GM12878 (cell line): ENCODE measurements at regions of chr12 and their contacts with region 1.

Region 1: DNA sequence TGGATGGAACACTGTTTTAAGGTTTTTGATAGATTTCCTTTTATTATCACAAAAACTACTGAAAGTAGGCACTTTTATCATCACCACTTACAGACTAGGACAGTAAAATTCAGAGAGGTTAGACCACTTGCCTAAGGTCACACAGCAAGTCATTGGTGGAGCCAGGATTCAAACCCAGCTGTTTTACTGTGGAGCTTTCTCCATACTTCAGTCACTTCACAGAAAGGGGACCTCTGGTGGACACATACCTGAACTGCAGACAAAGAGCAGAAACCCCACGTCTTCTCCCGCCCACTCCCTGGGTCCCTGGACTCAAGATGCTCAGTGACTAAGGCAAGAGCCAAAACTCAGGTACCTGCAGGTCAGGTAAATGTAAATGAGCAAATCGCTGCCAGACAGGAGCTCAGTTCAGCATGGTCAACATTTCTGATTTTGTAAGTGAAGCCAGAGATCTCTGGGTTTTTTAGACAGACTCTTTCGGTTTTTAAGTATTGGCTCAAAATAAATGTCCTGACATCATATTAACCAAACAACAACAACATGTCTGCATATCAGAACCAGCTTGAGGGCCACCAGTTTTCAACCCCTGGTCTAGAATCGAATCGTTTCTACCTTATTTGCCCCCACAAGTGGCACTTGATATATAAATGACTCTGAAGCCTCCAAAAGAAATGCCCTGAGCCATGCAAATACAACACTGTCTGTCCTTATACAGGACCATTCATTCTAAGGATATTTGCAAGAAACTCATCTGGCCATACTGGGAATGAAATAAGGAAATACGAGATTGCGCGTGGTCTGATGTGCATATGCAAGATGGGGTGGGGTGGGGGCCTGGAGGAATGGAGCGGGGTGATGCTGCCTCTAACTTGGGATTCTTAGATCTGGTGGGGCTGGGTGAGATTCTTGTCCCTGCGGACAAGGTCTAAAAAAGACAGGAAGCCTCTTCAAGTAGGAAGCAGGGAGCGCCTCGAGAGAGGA is 110.9 kb downstream of the KSR2 start:
- DNase-seq: peak; percentile 25
- ATAC-seq: peak; percentile 82
- H3K4me3 ChIP-seq: no peak overlapping the region
- H3K27ac ChIP-seq: no peak overlapping the region
- H3K4me1 ChIP-seq: no peaks in the 10 kb centered on the region
- H3K27me3 ChIP-seq: no peaks in the 10 kb centered on the region; a peak in 1 of 4 replicates
- CTCF ChIP-seq: peak; percentile 55 to 79 (median 65)
- EP300 ChIP-seq: no peak
- POLR2A ChIP-seq: no peak
- RAD21 ChIP-seq: 0 out of 2 replicates have a peak, but pooled peaks have one; percentile 21

Region 2: GRCh38 chr12:117212563-117213190 is 645.2 kb before region 1 on chr12:
- CTCF ChIA-PET with region 1: interaction called, 10 read pairs
- POLR2A ChIA-PET with region 1: no interaction called
- RAD21 ChIA-PET with region 1: interaction called, 3 read pairs
- SMC1A ChIA-PET with region 1: no interaction called
- in situ Hi-C with region 1: no loop called
- intact Hi-C with region 1: no loop called
- DNase-seq: no peak
- ATAC-seq: peak; percentile 88
- H3K4me3 ChIP-seq: no peak overlapping the region
- H3K27ac ChIP-seq: no peak overlapping the region
- H3K4me1 ChIP-seq: no peaks in the 10 kb centered on the region; the same call in 1 of the 2 replicates
- H3K27me3 ChIP-seq: no peaks in the 10 kb centered on the region; a peak in 1 of 4 replicates
- CTCF ChIP-seq: peak; percentile 88 to 94 (median 89)
- EP300 ChIP-seq: no peak
- POLR2A ChIP-seq: no peak
- RAD21 ChIP-seq: peak; percentile 84

Region 3: GRCh38 chr12:117367011-117367638 is 490.8 kb before region 1 on chr12:
- CTCF ChIA-PET with region 1: interaction called, 50 read pairs
- POLR2A ChIA-PET with region 1: no interaction called
- RAD21 ChIA-PET with region 1: interaction called, 12 read pairs
- SMC1A ChIA-PET with region 1: interaction called, 6 read pairs
- in situ Hi-C with region 1: no loop called
- intact Hi-C with region 1: loop called (anchors 5 kb)
- DNase-seq: peak; percentile 12
- ATAC-seq: peak; percentile 78
- H3K4me3 ChIP-seq: no peak overlapping the region
- H3K27ac ChIP-seq: no peak overlapping the region
- H3K4me1 ChIP-seq: no peaks in the 10 kb centered on the region
- H3K27me3 ChIP-seq: peaks cover 0 to 2% of the 10 kb centered on the region in 2 experiments; a peak in 1 of 4 replicates
- CTCF ChIP-seq: peak; percentile 83 to 87 (median 86)
- EP300 ChIP-seq: no peak
- POLR2A ChIP-seq: no peak
- RAD21 ChIP-seq: peak; percentile 89

Region 4: GRCh38 chr12:117649796-117650195 is 208.1 kb before region 1 on chr12:
- CTCF ChIA-PET with region 1: no interaction called
- POLR2A ChIA-PET with region 1: no interaction called
- RAD21 ChIA-PET with region 1: no interaction called
- SMC1A ChIA-PET with region 1: no interaction called
- in situ Hi-C with region 1: no loop called
- intact Hi-C with region 1: no loop called
- DNase-seq: no peak
- ATAC-seq: no peak
- H3K4me3 ChIP-seq: no peak overlapping the region
- H3K27ac ChIP-seq: no peak overlapping the region
- H3K4me1 ChIP-seq: no peaks in the 10 kb centered on the region
- H3K27me3 ChIP-seq: no peaks in the 10 kb centered on the region; a peak in 1 of 4 replicates
- CTCF ChIP-seq: no peak
- EP300 ChIP-seq: no peak
- POLR2A ChIP-seq: no peak
- RAD21 ChIP-seq: no peak

Region 5: GRCh38 chr12:117662620-117663395 is 195.1 kb before region 1 on chr12:
- CTCF ChIA-PET with region 1: no interaction called
- POLR2A ChIA-PET with region 1: no interaction called
- RAD21 ChIA-PET with region 1: no interaction called
- SMC1A ChIA-PET with region 1: no interaction called
- in situ Hi-C with region 1: no loop called
- intact Hi-C with region 1: no loop called
- DNase-seq: no peak
- ATAC-seq: no peak
- H3K4me3 ChIP-seq: no peak overlapping the region
- H3K27ac ChIP-seq: no peak overlapping the region
- H3K4me1 ChIP-seq: no peaks in the 10 kb centered on the region
- H3K27me3 ChIP-seq: no peaks in the 10 kb centered on the region
- CTCF ChIP-seq: no peak
- EP300 ChIP-seq: no peak
- POLR2A ChIP-seq: no peak
- RAD21 ChIP-seq: no peak

Region 6: DNA sequence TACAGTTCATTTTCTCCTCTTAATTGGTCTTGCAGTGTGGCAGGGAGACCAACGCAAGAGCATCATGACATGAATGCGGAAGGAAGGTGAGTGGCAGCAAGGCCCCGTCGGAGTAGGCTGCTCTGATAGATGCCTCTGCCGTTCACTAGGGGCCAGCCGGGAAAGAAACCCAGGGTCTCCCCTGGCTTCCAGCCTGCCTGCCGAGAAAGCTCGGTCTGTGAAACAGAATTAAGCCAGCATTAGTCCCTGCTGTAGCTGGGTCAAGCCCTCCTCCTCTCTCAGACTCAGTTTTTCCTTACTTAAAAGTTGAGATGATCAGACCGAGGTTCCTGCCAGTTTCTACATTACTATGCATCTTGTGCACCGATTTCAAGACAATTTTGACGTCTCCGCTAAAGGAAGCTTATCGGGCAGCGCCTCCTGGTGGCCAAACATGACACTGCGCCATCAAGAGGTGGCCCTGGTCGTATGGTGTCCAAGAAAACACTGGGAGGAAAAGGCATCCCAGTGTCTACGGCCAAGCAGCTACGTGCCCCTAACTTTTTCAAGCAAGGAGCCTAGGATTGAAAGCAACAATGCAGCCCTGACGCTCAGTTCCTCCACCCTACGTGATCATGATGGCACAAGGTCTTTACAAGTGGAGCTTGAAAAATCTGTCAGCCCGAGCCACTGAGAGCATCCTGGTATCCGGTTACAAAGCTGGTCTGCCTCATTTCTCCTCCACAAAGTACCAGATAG is 20.8 kb before region 1 on chr12:
- CTCF ChIA-PET with region 1: interaction called, 40 read pairs
- POLR2A ChIA-PET with region 1: no interaction called
- RAD21 ChIA-PET with region 1: interaction called, 12 read pairs
- SMC1A ChIA-PET with region 1: interaction called, 6 read pairs
- in situ Hi-C with region 1: no loop called
- intact Hi-C with region 1: no loop called
- DNase-seq: peak; percentile 20
- ATAC-seq: peak; percentile 88
- H3K4me3 ChIP-seq: no peak overlapping the region
- H3K27ac ChIP-seq: no peak overlapping the region
- H3K4me1 ChIP-seq: no peaks in the 10 kb centered on the region
- H3K27me3 ChIP-seq: no peaks in the 10 kb centered on the region; a peak in 1 of 4 replicates
- CTCF ChIP-seq: peak; percentile 95 to 98 (median 96)
- EP300 ChIP-seq: no peak
- POLR2A ChIP-seq: no peak
- RAD21 ChIP-seq: peak; percentile 89

Region 7: GRCh38 chr12:118035246-118036041 is 177.5 kb after region 1 on chr12:
- CTCF ChIA-PET with region 1: interaction called, 13 read pairs
- POLR2A ChIA-PET with region 1: no interaction called
- RAD21 ChIA-PET with region 1: interaction called, 7 read pairs
- SMC1A ChIA-PET with region 1: interaction called, 3 read pairs
- in situ Hi-C with region 1: no loop called
- intact Hi-C with region 1: no loop called
- DNase-seq: peak; percentile 90
- ATAC-seq: peak; percentile 91
- H3K4me3 ChIP-seq: no peak overlapping the region
- H3K27ac ChIP-seq: peak overlapping the region; percentile 75
- H3K4me1 ChIP-seq: peaks cover 29% of the 10 kb centered on the region
- H3K27me3 ChIP-seq: no peaks in the 10 kb centered on the region
- CTCF ChIP-seq: peak in 2 of 3 experiments; percentile 5 to 13; a peak in 1 of 6 replicates
- EP300 ChIP-seq: peak; percentile 60 to 74; a peak in 3 of 4 replicates
- POLR2A ChIP-seq: 0 out of 2 replicates have a peak, but pooled peaks have one; percentile 19
- RAD21 ChIP-seq: no peak

Region 8: GRCh38 chr12:118061011-118061875 is 203.3 kb after region 1 on chr12 and contains the start of gene WSB2:
- CTCF ChIA-PET with region 1: interaction called, 22 read pairs
- POLR2A ChIA-PET with region 1: interaction called, 3 read pairs
- RAD21 ChIA-PET with region 1: interaction called, 5 read pairs
- SMC1A ChIA-PET with region 1: interaction called, 3 read pairs
- in situ Hi-C with region 1: no loop called
- intact Hi-C with region 1: no loop called
- DNase-seq: no peak
- ATAC-seq: peak; percentile 40
- H3K4me3 ChIP-seq: peak within 1 kb of the TSS; percentile 96
- H3K27ac ChIP-seq: peak within 1 kb of the TSS; percentile 93
- H3K4me1 ChIP-seq: peaks cover 13% of the 10 kb centered on the region
- H3K27me3 ChIP-seq: no peaks in the 10 kb centered on the region
- CTCF ChIP-seq: no peak
- EP300 ChIP-seq: no peak
- POLR2A ChIP-seq: peak; percentile 50; the same call in 1 of the 2 replicates
- RAD21 ChIP-seq: no peak
- polyA plus RNA-seq, gene WSB2: 30.0 to 33.6 TPM

Region 9: GRCh38 chr12:118356809-118357256 is 498.9 kb after region 1 on chr12:
- CTCF ChIA-PET with region 1: no interaction called
- POLR2A ChIA-PET with region 1: no interaction called
- RAD21 ChIA-PET with region 1: no interaction called
- SMC1A ChIA-PET with region 1: no interaction called
- in situ Hi-C with region 1: no loop called
- intact Hi-C with region 1: no loop called
- DNase-seq: no peak
- ATAC-seq: peak; percentile 52
- H3K4me3 ChIP-seq: peak overlapping the region; percentile 67
- H3K27ac ChIP-seq: peak overlapping the region; percentile 89
- H3K4me1 ChIP-seq: peaks cover 6% of the 10 kb centered on the region; the same call in 1 of the 2 replicates
- H3K27me3 ChIP-seq: no peaks in the 10 kb centered on the region
- CTCF ChIP-seq: no peak
- EP300 ChIP-seq: no peak
- POLR2A ChIP-seq: no peak
- RAD21 ChIP-seq: no peak